B cell (primary cell): ENCODE measurements at regions of chr2 and their contacts with region 1.

Region 1: GRCh38 chr2:85561317-85561979 is at the start of gene GGCX:
- DNase-seq: peak; percentile 96
- ATAC-seq: peak; percentile 91
- H3K4me3 ChIP-seq: peak within 1 kb of the TSS; percentile 60 to 96 (median 88)
- H3K4me3 Mint-ChIP-seq: peak within 1 kb of the TSS; percentile 99
- H3K27ac ChIP-seq: peak within 1 kb of the TSS; percentile 73 to 90
- H3K27ac Mint-ChIP-seq: peak within 1 kb of the TSS; percentile 99
- H3K4me1 ChIP-seq: peaks cover 20 to 28% of the 10 kb centered on the region in 2 donors
- H3K4me1 Mint-ChIP-seq: peaks cover 30% of the 10 kb centered on the region
- H3K27me3 ChIP-seq: no peaks in the 10 kb centered on the region
- H3K27me3 Mint-ChIP-seq: no peaks in the 10 kb centered on the region
- CTCF ChIP-seq: no peak
- total RNA-seq, gene GGCX: 33.0 and 36.8 TPM in 2 replicates

Region 2: GRCh38 chr2:84201158-84201557 is 1360.3 kb before region 1 on chr2:
- CTCF ChIA-PET with region 1: no interaction called
- POLR2A ChIA-PET with region 1: no interaction called
- intact Hi-C with region 1: no loop called
- DNase-seq: no peak
- ATAC-seq: no peak
- H3K4me3 ChIP-seq: no peak overlapping the region
- H3K4me3 Mint-ChIP-seq: no peak overlapping the region
- H3K27ac ChIP-seq: no peak overlapping the region
- H3K27ac Mint-ChIP-seq: no peak overlapping the region
- H3K4me1 ChIP-seq: no peaks in the 10 kb centered on the region
- H3K4me1 Mint-ChIP-seq: no peaks in the 10 kb centered on the region
- H3K27me3 ChIP-seq: no peaks in the 10 kb centered on the region
- H3K27me3 Mint-ChIP-seq: peaks cover 3% of the 10 kb centered on the region
- CTCF ChIP-seq: no peak

Region 3: GRCh38 chr2:85354286-85355072 is 207.0 kb before region 1 on chr2 and contains the starts of genes ELMOD3 and RETSAT:
- CTCF ChIA-PET with region 1: no interaction called
- POLR2A ChIA-PET with region 1: no interaction called
- intact Hi-C with region 1: loop called (anchors 1 kb)
- DNase-seq: peak; percentile 98
- ATAC-seq: peak; percentile 99
- H3K4me3 ChIP-seq: peak within 1 kb of the TSS; percentile 60 to 100 (median 85)
- H3K4me3 Mint-ChIP-seq: peak within 1 kb of the TSS; percentile 95
- H3K27ac ChIP-seq: peak within 1 kb of the TSS; percentile 81 to 95
- H3K27ac Mint-ChIP-seq: peak within 1 kb of the TSS; percentile 95
- H3K4me1 ChIP-seq: peaks cover 19 to 26% of the 10 kb centered on the region in 2 donors
- H3K4me1 Mint-ChIP-seq: peaks cover 40% of the 10 kb centered on the region
- H3K27me3 ChIP-seq: no peaks in the 10 kb centered on the region
- H3K27me3 Mint-ChIP-seq: no peaks in the 10 kb centered on the region
- CTCF ChIP-seq: no peak
- total RNA-seq, gene ELMOD3: 34.0 and 34.3 TPM in 2 replicates
- total RNA-seq, gene RETSAT: 23.8 and 28.1 TPM in 2 replicates

Region 4: DNA sequence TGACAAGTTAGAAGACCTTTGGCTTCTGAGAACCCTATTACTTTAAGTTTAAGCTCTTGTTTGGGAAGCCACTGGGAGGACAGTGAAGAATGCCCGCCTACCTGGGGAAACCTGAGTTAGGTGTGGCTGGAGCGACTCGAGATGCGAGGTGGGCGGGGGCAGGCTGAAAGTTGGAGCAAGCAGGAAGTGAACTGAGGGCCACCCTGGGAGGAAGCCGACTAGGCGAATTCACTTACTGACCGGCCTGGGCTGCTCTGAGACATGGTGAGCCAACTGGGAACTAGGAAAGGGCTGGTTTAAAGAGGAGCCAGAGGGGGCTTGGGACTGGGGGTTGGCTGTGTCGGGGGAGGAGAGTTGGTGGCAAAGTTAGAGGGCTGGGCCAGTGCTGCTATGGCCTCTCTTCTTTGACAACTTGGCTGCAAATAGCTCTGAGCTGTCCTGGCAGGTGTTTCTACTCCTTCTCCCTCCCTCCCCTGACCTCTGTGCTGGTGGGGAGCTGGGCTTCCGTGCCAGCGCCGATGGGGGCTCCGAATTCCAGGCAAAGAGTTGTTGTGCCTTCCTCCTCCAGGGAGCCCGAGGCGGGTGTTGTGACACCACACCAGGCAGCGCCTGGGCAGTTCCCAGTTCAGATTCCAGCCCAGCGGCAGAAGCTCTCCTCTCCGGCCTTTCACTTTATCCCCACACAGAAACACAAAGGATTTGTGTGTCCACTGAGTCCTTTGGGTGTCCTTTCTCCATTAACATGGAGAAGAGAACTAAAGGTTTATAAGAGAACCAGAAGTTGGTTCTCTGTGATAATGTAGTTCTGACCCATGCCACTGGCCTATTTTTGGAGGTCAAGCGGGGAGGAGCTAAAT is 16.2 kb after region 1 on chr2 and contains the start of gene VAMP8:
- CTCF ChIA-PET with region 1: no interaction called
- POLR2A ChIA-PET with region 1: interaction called, 6 read pairs
- intact Hi-C with region 1: loop called (anchors 1 kb)
- DNase-seq: peak; percentile 68
- ATAC-seq: peak; percentile 67
- H3K4me3 ChIP-seq: peak within 1 kb of the TSS; percentile 50 to 97 (median 70)
- H3K4me3 Mint-ChIP-seq: peak within 1 kb of the TSS; percentile 93
- H3K27ac ChIP-seq: peak within 1 kb of the TSS; percentile 70 to 87
- H3K27ac Mint-ChIP-seq: peak within 1 kb of the TSS; percentile 96
- H3K4me1 ChIP-seq: peaks cover 20 to 36% of the 10 kb centered on the region in 2 donors
- H3K4me1 Mint-ChIP-seq: peaks cover 37% of the 10 kb centered on the region
- H3K27me3 ChIP-seq: no peaks in the 10 kb centered on the region
- H3K27me3 Mint-ChIP-seq: no peaks in the 10 kb centered on the region
- CTCF ChIP-seq: no peak
- total RNA-seq, gene VAMP8: 73.1 and 73.8 TPM in 2 replicates

Region 5: DNA sequence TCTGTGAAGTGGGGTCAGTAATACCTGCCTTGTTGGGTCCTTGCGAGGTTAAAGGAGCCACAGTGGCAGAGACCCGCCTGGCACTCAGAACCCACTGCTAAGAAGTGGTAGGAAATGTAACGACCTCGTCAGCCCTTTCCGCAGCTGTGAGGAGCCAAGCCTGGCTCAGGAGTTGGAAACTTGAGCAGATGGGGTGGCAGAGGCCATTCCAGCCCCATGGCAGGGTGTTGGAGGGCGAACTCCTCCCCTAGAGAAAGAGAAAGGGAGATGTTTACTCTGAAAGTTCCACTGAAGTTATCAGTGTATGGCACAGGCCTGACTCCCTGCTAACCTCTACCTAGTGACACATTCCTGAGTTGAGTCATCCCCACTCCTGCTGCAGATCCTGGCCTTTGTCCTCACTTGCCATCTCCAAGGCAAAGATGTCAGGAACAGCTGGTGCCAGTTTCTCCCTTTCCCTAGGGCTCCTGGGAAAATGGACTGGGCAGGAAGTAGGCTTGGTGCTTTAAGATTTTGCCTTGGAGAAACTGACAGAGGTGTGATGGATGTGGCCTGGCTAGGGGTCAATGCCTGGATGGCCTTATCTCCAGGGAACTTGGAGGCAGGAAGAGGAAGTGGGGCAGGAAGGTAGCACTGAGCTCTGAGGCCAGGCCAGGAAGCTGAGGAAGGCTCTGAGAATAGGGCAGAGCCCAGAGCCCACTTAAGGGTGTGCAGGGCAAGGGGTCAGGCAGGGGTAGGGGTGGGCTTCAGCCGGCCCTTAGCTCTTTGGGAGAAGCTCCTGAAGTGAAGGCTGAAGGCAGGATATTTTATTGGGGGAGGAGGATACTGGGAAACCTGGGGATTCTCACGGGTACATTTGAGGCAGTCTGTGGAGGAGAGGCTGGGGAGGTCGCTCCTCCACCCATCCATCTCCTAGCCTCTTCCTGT is 23.7 kb after region 1 on chr2:
- CTCF ChIA-PET with region 1: interaction called, 4 read pairs
- POLR2A ChIA-PET with region 1: interaction called, 15 read pairs
- intact Hi-C with region 1: no loop called
- DNase-seq: peak; percentile 43
- ATAC-seq: peak; percentile 26
- H3K4me3 ChIP-seq: peak overlapping the region; percentile 34 to 70 (median 61)
- H3K4me3 Mint-ChIP-seq: peak overlapping the region; percentile 90
- H3K27ac ChIP-seq: peak overlapping the region in 1 of 2 donors; percentile 64
- H3K27ac Mint-ChIP-seq: peak overlapping the region; percentile 90
- H3K4me1 ChIP-seq: peaks cover 25 to 41% of the 10 kb centered on the region in 2 donors
- H3K4me1 Mint-ChIP-seq: peaks cover 49% of the 10 kb centered on the region
- H3K27me3 ChIP-seq: no peaks in the 10 kb centered on the region
- H3K27me3 Mint-ChIP-seq: no peaks in the 10 kb centered on the region
- CTCF ChIP-seq: no peak

Region 6: GRCh38 chr2:85595301-85596025 is 34.0 kb after region 1 on chr2 and contains the start of gene RNF181:
- CTCF ChIA-PET with region 1: interaction called, 4 read pairs
- POLR2A ChIA-PET with region 1: interaction called, 5 read pairs
- intact Hi-C with region 1: loop called (anchors 1 kb)
- DNase-seq: peak; percentile 94
- ATAC-seq: peak; percentile 100
- H3K4me3 ChIP-seq: peak within 1 kb of the TSS; percentile 65 to 93 (median 86)
- H3K4me3 Mint-ChIP-seq: peak within 1 kb of the TSS; percentile 92
- H3K27ac ChIP-seq: peak within 1 kb of the TSS; percentile 76 to 81
- H3K27ac Mint-ChIP-seq: peak within 1 kb of the TSS; percentile 95
- H3K4me1 ChIP-seq: peaks cover 17 to 23% of the 10 kb centered on the region in 2 donors
- H3K4me1 Mint-ChIP-seq: peaks cover 29% of the 10 kb centered on the region
- H3K27me3 ChIP-seq: no peaks in the 10 kb centered on the region
- H3K27me3 Mint-ChIP-seq: no peaks in the 10 kb centered on the region
- CTCF ChIP-seq: no peak
- total RNA-seq, gene RNF181: 67.3 and 76.6 TPM in 2 replicates

Region 7: GRCh38 chr2:85602476-85603234 is 41.2 kb after region 1 on chr2 and contains the start of gene TMEM150A:
- CTCF ChIA-PET with region 1: interaction called, 7 read pairs
- POLR2A ChIA-PET with region 1: interaction called, 7 read pairs
- intact Hi-C with region 1: loop called (anchors 1 kb)
- DNase-seq: peak; percentile 93
- ATAC-seq: peak; percentile 97
- H3K4me3 ChIP-seq: peak within 1 kb of the TSS; percentile 72 to 92 (median 86)
- H3K4me3 Mint-ChIP-seq: peak within 1 kb of the TSS; percentile 95
- H3K27ac ChIP-seq: peak within 1 kb of the TSS; percentile 20 to 74
- H3K27ac Mint-ChIP-seq: peak within 1 kb of the TSS; percentile 89
- H3K4me1 ChIP-seq: peaks cover 17 to 23% of the 10 kb centered on the region in 2 donors
- H3K4me1 Mint-ChIP-seq: peaks cover 30% of the 10 kb centered on the region
- H3K27me3 ChIP-seq: no peaks in the 10 kb centered on the region
- H3K27me3 Mint-ChIP-seq: no peaks in the 10 kb centered on the region
- CTCF ChIP-seq: no peak
- total RNA-seq, gene TMEM150A: 23.0 and 23.1 TPM in 2 replicates

Region 8: DNA sequence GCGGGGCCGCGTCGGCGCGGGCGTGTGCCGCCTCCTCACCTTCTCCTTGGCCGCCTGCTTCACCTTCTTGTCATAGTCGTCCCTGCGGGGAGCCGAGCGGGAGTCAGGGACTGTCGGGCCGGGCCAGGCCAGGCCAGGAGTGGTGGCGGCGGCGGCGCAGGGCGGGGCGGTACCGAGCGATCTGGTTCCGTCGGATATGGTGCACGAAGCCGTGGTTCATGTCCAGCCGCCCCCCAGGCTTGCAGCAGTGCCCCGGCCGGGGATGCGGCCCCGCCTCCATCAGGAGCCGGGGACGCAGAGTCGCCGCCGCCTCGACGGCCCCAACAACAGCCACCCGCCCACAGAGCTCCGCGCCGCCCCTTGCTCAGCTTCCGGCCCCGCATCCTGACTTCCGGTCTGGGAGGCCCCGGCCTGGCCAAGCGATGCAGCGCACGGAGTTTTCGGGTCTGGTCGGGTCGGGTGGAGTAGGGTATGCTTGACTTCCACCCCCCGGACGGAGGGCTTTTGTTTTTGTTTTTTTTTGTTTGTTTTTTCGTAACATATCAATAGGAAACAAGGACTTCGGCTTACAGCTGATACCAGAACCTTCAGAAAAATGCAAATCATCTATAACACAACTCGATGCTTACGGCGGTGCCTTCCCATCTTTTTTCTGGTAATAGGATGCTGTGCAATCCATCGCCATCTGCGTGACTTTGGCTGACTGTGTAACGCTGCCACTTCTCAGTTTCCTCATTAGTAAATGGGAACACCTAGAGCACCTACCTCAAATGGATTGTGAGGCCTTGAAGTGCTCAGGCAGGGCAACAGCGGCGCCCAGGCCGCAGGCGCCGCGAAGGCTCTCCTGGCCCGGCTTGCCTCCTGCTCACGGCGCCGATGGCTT is 50.5 kb after region 1 on chr2 and contains the start of gene C2orf68:
- CTCF ChIA-PET with region 1: no interaction called
- POLR2A ChIA-PET with region 1: no interaction called
- intact Hi-C with region 1: loop called (anchors 1 kb)
- DNase-seq: peak; percentile 89
- ATAC-seq: peak; percentile 66
- H3K4me3 ChIP-seq: peak within 1 kb of the TSS; percentile 72 to 88 (median 76)
- H3K4me3 Mint-ChIP-seq: peak within 1 kb of the TSS; percentile 98
- H3K27ac ChIP-seq: peak within 1 kb of the TSS; percentile 34 to 83
- H3K27ac Mint-ChIP-seq: peak within 1 kb of the TSS; percentile 95
- H3K4me1 ChIP-seq: peaks cover 13 to 29% of the 10 kb centered on the region in 2 donors
- H3K4me1 Mint-ChIP-seq: peaks cover 33% of the 10 kb centered on the region
- H3K27me3 ChIP-seq: no peaks in the 10 kb centered on the region
- H3K27me3 Mint-ChIP-seq: no peaks in the 10 kb centered on the region
- CTCF ChIP-seq: no peak
- total RNA-seq, gene C2orf68: 82.4 and 90.1 TPM in 2 replicates